CD4-positive, alpha-beta memory T cell (primary cell): ENCODE measurements at regions of chr6 and their contacts with region 1.

Region 1: DNA sequence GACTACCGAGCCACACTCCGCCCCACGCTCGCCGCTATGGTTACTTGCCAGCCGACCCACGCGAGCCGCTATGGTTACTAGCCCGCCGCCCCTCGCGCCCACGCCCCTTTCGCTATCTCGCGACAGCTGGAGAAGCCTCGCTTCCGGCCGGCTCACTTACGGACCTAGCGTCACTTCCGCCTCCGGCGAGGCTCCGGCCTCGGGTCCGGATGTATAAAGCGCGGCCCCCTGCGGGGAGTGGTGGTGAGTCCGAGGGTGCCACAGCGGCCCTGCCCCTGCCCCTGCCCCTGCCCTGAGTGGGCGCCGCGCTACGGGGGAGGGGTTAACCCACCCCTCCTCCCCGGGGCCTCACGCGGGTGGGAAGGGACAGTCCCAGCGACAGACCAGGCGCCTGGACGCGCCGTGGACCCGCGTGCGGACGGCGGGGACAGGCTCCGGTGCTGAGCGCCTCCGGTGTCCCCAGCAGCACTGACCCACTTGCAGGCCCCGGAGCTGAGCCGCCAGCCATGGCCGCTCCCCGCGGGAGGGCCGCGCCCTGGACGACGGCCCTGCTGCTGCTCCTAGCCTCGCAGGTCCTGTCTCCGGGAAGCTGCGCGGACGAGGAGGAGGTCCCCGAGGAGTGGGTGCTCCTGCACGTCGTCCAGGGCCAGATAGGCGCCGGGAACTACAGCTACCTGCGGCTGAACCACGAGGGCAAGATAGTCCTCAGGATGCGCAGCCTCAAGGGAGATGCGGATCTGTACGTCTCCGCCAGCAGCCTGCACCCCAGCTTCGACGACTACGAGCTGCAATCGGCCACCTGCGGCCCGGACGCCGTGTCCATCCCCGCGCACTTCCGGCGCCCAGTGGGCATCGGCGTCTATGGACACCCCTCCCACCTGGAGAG is at the starts of genes C6orf120 and WDR27:
- DNase-seq: peak; percentile 96 to 98 (median 96)
- H3K4me3 ChIP-seq: peak within 1 kb of the TSS; percentile 76 to 98
- H3K4me3 Mint-ChIP-seq: peak within 1 kb of the TSS; percentile 91 to 97 (median 93)
- H3K27ac ChIP-seq: peak within 1 kb of the TSS; percentile 94
- H3K27ac Mint-ChIP-seq: peak within 1 kb of the TSS; percentile 92 to 97 (median 96)
- H3K4me1 ChIP-seq: peaks cover 50% of the 10 kb centered on the region
- H3K4me1 Mint-ChIP-seq: peaks cover 32 to 79% (median 52%) of the 10 kb centered on the region in 4 donors
- H3K27me3 ChIP-seq: no peaks in the 10 kb centered on the region
- H3K27me3 Mint-ChIP-seq: no peaks in the 10 kb centered on the region
- total RNA-seq, gene C6orf120: 32.9 to 35.9 TPM
- total RNA-seq, gene WDR27: 73.0 to 82.8 TPM

Region 2: GRCh38 chr6:169212897-169213813 is 489.0 kb before region 1 on chr6:
- CTCF ChIA-PET with region 1: interaction called, 3 read pairs
- POLR2A ChIA-PET with region 1: interaction called, 12 read pairs
- intact Hi-C with region 1: no loop called
- DNase-seq: peak; percentile 82 to 94 (median 93)
- H3K4me3 ChIP-seq: peak overlapping the region in 1 of 2 donors; percentile 36
- H3K4me3 Mint-ChIP-seq: peak overlapping the region; percentile 44 to 84 (median 70)
- H3K27ac ChIP-seq: peak overlapping the region; percentile 32
- H3K27ac Mint-ChIP-seq: peak overlapping the region in 6 of 7 donors; percentile 65 to 95 (median 86)
- H3K4me1 ChIP-seq: peaks cover 10% of the 10 kb centered on the region
- H3K4me1 Mint-ChIP-seq: peaks cover 6 to 12% (median 8%) of the 10 kb centered on the region in 4 donors
- H3K27me3 ChIP-seq: no peaks in the 10 kb centered on the region
- H3K27me3 Mint-ChIP-seq: no peaks in the 10 kb centered on the region

Region 3: GRCh38 chr6:169723200-169723909 is 21.2 kb after region 1 on chr6:
- CTCF ChIA-PET with region 1: interaction called, 15 read pairs
- POLR2A ChIA-PET with region 1: interaction called, 279 read pairs
- intact Hi-C with region 1: loop called (anchors 1 kb)
- DNase-seq: peak; percentile 74 to 79 (median 76)
- H3K4me3 ChIP-seq: peak overlapping the region; percentile 76 to 90
- H3K4me3 Mint-ChIP-seq: peak overlapping the region; percentile 89 to 100 (median 96)
- H3K27ac ChIP-seq: peak overlapping the region; percentile 85
- H3K27ac Mint-ChIP-seq: peak overlapping the region; percentile 93 to 99 (median 96)
- H3K4me1 ChIP-seq: peaks cover 49% of the 10 kb centered on the region
- H3K4me1 Mint-ChIP-seq: peaks cover 28 to 55% (median 42%) of the 10 kb centered on the region in 4 donors
- H3K27me3 ChIP-seq: no peaks in the 10 kb centered on the region
- H3K27me3 Mint-ChIP-seq: no peaks in the 10 kb centered on the region

Region 4: GRCh38 chr6:170306324-170307079 is 604.3 kb after region 1 on chr6 and contains the start of gene FAM120B:
- CTCF ChIA-PET with region 1: no interaction called
- POLR2A ChIA-PET with region 1: interaction called, 3 read pairs
- intact Hi-C with region 1: loop called (anchors 10 kb)
- DNase-seq: peak; percentile 95 to 96 (median 95)
- H3K4me3 ChIP-seq: peak within 1 kb of the TSS; percentile 85 to 99
- H3K4me3 Mint-ChIP-seq: peak within 1 kb of the TSS; percentile 91 to 99 (median 94)
- H3K27ac ChIP-seq: peak within 1 kb of the TSS; percentile 84
- H3K27ac Mint-ChIP-seq: peak within 1 kb of the TSS; percentile 93 to 98 (median 97)
- H3K4me1 ChIP-seq: peaks cover 53% of the 10 kb centered on the region
- H3K4me1 Mint-ChIP-seq: peaks cover 34 to 43% (median 41%) of the 10 kb centered on the region in 4 donors
- H3K27me3 ChIP-seq: no peaks in the 10 kb centered on the region
- H3K27me3 Mint-ChIP-seq: peaks cover 8 to 14% of the 10 kb centered on the region in 2 donors
- total RNA-seq, gene FAM120B: 46.8 to 48.6 TPM

Region 5: GRCh38 chr6:170561561-170562220 is 859.5 kb after region 1 on chr6:
- CTCF ChIA-PET with region 1: no interaction called
- POLR2A ChIA-PET with region 1: no interaction called
- intact Hi-C with region 1: no loop called
- DNase-seq: no peak
- H3K4me3 ChIP-seq: no peak overlapping the region
- H3K4me3 Mint-ChIP-seq: no peak overlapping the region
- H3K27ac ChIP-seq: no peak overlapping the region
- H3K27ac Mint-ChIP-seq: no peak overlapping the region
- H3K4me1 ChIP-seq: no peaks in the 10 kb centered on the region
- H3K4me1 Mint-ChIP-seq: peaks cover 24 to 45% (median 33%) of the 10 kb centered on the region in 4 donors
- H3K27me3 ChIP-seq: no peaks in the 10 kb centered on the region
- H3K27me3 Mint-ChIP-seq: no peaks in the 10 kb centered on the region

Region 6: GRCh38 chr6:170584181-170584953 is 882.2 kb after region 1 on chr6 and contains the start of gene PDCD2:
- CTCF ChIA-PET with region 1: no interaction called
- POLR2A ChIA-PET with region 1: interaction called, 12 read pairs
- intact Hi-C with region 1: loop called (anchors 1 kb)
- DNase-seq: peak; percentile 89 to 94 (median 92)
- H3K4me3 ChIP-seq: peak within 1 kb of the TSS; percentile 71 to 92
- H3K4me3 Mint-ChIP-seq: peak within 1 kb of the TSS; percentile 96 to 98 (median 97)
- H3K27ac ChIP-seq: peak within 1 kb of the TSS; percentile 87
- H3K27ac Mint-ChIP-seq: peak within 1 kb of the TSS; percentile 96 to 99 (median 98)
- H3K4me1 ChIP-seq: peaks cover 27% of the 10 kb centered on the region
- H3K4me1 Mint-ChIP-seq: peaks cover 18 to 46% (median 33%) of the 10 kb centered on the region in 4 donors
- H3K27me3 ChIP-seq: no peaks in the 10 kb centered on the region
- H3K27me3 Mint-ChIP-seq: peaks cover 0 to 3% of the 10 kb centered on the region in 2 donors
- total RNA-seq, gene PDCD2: 75.2 to 78.2 TPM